Ovary (tissue), 10 donors: ENCODE measurements at regions of chr18 and their contacts with region 1.

Region 1: GRCh38 chr18:62790871-62791772 is 75.8 kb downstream of the PHLPP1 start:
- DNase-seq: no peak
- H3K4me3 ChIP-seq: no peak overlapping the region
- H3K27ac ChIP-seq: no peak overlapping the region
- H3K4me1 ChIP-seq: peaks cover 4% of the 10 kb centered on the region
- H3K27me3 ChIP-seq: no peaks in the 10 kb centered on the region
- CTCF ChIP-seq: no peak
- EP300 ChIP-seq: no peak
- POLR2A ChIP-seq: no peak

Region 2: GRCh38 chr18:62729487-62730386 is 61.4 kb before region 1 on chr18:
- intact Hi-C with region 1: loop called in 1 of 4 experiments (anchors 10 kb)
- DNase-seq: no peak
- H3K4me3 ChIP-seq: no peak overlapping the region
- H3K27ac ChIP-seq: no peak overlapping the region
- H3K4me1 ChIP-seq: no peaks in the 10 kb centered on the region
- H3K27me3 ChIP-seq: no peaks in the 10 kb centered on the region
- CTCF ChIP-seq: no peak
- EP300 ChIP-seq: no peak
- POLR2A ChIP-seq: no peak